Activated T-helper 1 cell treated with anti-CD3 and anti-CD28 coated beads, Interleukin-12 subunit alpha, Interleukin-12 subunit beta, Interleukin-2, Interleukin-4 antibody, amounts not matched to agents 30 ng/mL and 10 ng/mL and 1 ng/mL, durations not matched to agents 14 hours and 24 hours and 36 hours (primary cell): ENCODE measurements at regions of chr15 and their contacts with region 1.

Region 1: GRCh38 chr15:35427091-35427490 is 118.9 kb downstream of the DPH6 start:
- DNase-seq: no peak
- H3K4me3 Mint-ChIP-seq: no peak overlapping the region
- H3K27ac Mint-ChIP-seq: no peak overlapping the region
- H3K4me1 Mint-ChIP-seq: no peaks in the 10 kb centered on the region
- H3K27me3 Mint-ChIP-seq: no peaks in the 10 kb centered on the region

Region 2: DNA sequence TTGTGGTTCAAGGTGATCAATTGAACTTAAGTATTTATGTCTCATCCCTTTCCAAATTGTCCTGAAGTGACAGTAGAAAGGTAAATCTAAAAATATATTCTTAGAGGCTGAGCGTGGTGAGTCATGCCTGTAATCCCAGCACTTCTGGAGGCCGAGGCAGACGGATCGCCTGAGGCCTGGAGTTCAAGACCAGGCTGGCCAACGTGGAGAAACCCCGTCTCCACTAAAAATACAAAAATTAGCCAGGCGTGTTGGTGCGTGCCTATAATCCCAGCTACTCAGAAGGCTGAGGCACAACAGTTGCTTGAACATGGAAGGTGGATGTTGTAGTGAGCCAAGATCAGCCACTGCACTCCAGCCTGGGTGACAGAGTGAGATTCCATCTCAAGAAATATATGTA is 107.7 kb before region 1 on chr15:
- intact Hi-C with region 1: no loop called
- DNase-seq: no peak
- H3K4me3 Mint-ChIP-seq: no peak overlapping the region
- H3K27ac Mint-ChIP-seq: no peak overlapping the region
- H3K4me1 Mint-ChIP-seq: no peaks in the 10 kb centered on the region
- H3K27me3 Mint-ChIP-seq: peaks cover 1% of the 10 kb centered on the region

Region 3: DNA sequence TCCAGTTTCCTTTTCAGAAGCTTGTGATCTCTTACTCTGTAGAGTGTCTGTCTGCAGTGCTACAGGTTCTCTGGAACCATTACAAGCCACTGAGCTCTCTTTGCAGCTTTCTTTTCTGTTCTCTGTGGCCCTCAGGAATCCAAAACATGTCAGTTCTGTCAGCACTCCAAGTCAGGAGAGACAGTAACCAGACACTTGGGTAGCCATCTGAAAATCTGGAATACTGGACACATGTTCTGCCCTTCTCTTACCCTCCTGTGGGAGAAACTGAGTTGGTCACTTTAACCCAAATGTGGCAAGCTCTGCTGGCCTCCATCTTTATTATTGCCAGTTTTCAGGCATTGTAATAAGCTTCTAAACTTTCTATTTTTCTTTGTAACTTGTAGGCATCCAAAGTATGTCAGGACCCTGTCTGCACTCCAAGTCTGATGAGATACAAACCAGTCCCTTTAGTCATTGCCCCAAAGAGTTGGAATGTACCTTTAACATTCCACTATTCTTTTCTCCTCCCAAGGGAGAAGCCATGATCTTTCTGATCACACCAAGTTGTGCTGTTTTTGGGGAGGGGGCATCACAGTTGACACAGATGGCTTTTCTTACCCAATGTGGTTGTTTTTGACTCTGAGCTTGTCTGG is 64.8 kb before region 1 on chr15:
- intact Hi-C with region 1: loop called (anchors 10 kb)
- DNase-seq: no peak
- H3K4me3 Mint-ChIP-seq: no peak overlapping the region
- H3K27ac Mint-ChIP-seq: no peak overlapping the region
- H3K4me1 Mint-ChIP-seq: no peaks in the 10 kb centered on the region
- H3K27me3 Mint-ChIP-seq: no peaks in the 10 kb centered on the region